ENCODE measurements at regions of chr6 and their contacts with region 1.

Region 1: DNA sequence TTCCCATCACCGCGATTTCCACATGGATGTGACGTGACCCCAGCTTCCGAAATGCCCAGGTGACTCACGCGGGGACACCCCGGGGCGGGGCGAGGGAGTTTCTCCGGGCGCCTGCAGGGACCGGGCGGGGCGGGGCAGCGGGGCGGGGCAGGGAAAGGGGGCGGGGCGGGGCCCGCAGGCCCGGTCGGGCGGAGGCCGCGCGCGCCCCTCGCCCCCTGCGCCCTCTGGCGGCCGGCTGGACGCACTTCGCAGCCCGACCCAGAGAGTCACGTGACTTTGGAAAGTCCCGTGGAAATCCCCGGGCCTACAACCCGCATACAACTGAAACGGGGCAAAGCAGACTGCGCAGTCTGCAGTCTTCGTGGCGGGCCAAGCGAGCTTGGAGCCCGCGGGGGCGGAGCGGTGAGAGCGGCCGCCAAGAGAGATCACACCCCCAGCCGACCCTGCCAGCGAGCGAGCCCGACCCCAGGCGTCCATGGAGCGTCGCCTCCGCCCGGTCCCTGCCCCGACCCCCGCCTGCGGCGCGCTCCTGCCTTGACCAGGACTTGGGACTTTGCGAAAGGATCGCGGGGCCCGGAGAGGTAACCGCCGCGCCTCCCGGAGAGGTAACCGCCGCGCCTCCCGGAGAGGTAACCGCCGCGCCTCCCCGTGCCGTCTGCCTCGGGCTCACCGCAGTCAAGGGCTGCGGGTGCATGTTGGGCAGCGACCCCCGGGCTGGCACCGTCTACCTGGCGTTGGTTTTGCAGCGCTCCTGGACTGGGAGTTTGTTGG is at the start of gene TNFAIP3:
- H3K4me3 Mint-ChIP-seq: peak within 1 kb of the TSS; percentile 94
- H3K27ac Mint-ChIP-seq: peak within 1 kb of the TSS; percentile 96
- H3K4me1 Mint-ChIP-seq: peaks cover 54% of the 10 kb centered on the region
- H3K27me3 Mint-ChIP-seq: peaks cover 2% of the 10 kb centered on the region

Region 2: DNA sequence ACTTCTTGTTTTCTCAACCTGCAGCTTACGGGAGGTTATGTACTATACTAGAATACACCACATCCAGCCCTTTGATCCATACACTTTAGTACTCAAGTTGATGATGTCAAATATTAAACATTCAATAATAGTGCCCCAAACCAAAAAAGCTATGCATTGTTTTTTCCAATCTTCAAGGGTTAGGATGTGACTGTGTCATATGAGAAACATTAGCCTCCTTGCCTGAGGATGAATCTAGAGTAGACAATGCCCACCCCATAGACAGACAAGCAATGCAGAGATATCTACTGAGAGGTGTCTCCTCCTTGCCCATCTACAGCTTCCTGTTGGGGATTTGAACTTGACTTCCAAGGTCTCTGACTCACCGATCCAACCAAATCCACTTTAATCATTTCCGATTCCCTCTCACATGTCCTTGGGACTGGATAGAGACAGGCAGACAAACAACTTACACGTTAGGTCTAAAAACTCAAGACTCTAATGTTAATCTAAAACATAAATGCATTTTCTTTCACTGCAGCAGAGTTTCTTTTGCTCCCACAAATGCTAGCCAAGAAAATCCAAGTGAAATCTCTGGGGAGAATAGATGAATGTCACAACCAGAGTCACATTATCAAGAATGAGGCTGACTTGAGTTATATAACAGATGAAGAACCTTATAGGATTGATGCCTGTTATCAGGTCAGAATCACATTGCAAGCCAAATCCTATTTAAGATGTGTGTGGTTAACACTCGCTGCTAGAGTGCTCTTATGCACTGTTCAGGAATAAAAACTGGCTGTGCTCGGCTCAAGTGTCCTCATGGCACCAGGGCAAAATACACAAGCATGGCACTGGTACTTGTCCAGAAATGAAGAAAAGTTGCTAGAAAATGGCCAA is 75.6 kb before region 1 on chr6:
- intact Hi-C with region 1: loop called (anchors 5 kb)
- H3K4me3 Mint-ChIP-seq: no peak overlapping the region
- H3K27ac Mint-ChIP-seq: peak overlapping the region; percentile 17
- H3K4me1 Mint-ChIP-seq: peaks cover 33% of the 10 kb centered on the region
- H3K27me3 Mint-ChIP-seq: peaks cover 11% of the 10 kb centered on the region

Region 3: GRCh38 chr6:137846772-137847313 is 20.3 kb before region 1 on chr6:
- intact Hi-C with region 1: loop called (anchors 2 kb)
- H3K4me3 Mint-ChIP-seq: no peak overlapping the region
- H3K27ac Mint-ChIP-seq: no peak overlapping the region
- H3K4me1 Mint-ChIP-seq: peaks cover 4% of the 10 kb centered on the region
- H3K27me3 Mint-ChIP-seq: no peaks in the 10 kb centered on the region

Region 4: DNA sequence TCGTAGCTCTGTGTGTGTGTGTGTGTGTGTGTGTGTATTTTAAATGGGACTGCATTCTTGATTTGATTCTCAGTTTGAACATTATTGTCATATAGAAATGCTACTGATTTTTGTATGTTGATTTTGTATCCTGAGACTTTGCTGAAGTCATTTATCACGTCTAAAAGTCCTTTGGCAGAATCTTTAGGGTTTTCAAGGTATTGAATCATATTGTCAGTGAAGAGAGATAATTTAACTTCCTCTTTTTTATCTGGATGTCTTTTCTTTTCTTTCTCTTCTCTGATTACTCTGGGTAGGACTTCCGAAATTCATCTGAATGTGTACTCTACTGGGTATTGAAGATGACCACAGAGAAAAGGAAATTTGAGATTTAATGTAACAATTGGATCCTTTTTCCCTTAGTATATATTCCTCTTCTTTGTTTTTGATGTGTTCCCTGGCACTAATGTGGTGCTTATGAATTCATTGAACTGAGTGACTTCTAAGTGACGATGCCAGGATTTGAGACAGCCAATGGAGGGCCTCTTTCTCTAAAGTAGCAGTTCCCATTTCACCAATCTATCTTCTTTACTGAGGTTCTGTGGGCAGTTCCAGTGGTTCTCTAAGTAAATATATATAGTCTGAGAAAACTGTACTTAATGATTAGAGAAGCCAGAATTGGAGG is 47.6 kb after region 1 on chr6:
- intact Hi-C with region 1: no loop called
- H3K4me3 Mint-ChIP-seq: no peak overlapping the region
- H3K27ac Mint-ChIP-seq: no peak overlapping the region
- H3K4me1 Mint-ChIP-seq: peaks cover 46% of the 10 kb centered on the region
- H3K27me3 Mint-ChIP-seq: no peaks in the 10 kb centered on the region

Region 5: GRCh38 chr6:137944793-137945498 is 77.8 kb after region 1 on chr6:
- intact Hi-C with region 1: loop called (anchors 2 kb)
- H3K4me3 Mint-ChIP-seq: no peak overlapping the region
- H3K27ac Mint-ChIP-seq: peak overlapping the region; percentile 54
- H3K4me1 Mint-ChIP-seq: peaks cover 22% of the 10 kb centered on the region
- H3K27me3 Mint-ChIP-seq: no peaks in the 10 kb centered on the region